ENCODE measurements at regions of chr7 and their contacts with region 1.

Region 1: DNA sequence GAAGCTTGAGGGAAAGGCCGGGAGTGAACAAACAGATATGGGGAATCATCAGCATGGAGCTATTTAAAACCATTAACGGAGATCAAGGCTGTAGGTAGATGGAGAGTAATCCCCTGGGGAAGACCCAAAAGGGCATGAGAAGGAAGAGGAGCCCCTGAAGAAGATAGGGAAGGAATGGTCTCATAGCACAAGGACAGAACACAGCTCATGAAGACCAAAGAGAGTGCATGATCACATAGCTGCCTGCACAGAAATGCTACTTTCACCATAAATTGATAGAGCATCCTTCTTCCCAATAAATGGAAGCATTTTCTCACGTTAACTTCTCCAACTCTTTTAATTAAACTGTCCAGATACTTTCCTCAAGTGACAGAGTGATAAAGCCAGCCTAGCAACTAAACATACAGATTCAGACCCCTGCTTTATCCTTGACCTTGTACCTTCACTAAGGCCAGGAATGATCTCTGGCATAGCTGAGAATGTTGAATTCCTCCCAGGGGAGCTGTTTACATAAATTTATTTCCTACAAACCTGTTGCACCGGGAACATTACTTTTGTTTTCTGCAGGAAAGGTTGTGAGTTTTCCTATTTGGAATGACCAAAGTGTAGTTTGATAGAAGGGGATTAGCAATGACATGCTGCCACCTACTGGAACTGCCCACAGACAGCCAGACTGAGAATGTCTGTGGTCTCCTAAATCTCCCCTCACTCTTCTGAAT is 110.8 kb upstream of the LRGUK start:
- DNase-seq: peak; percentile 67
- H3K4me3 ChIP-seq: peak overlapping the region in 1 of 2 experiments; percentile 17; a peak in 1 of 4 replicates
- H3K27ac ChIP-seq: peak overlapping the region in 1 of 2 experiments; percentile 95; a peak in 2 of 4 replicates
- H3K4me1 ChIP-seq: peaks cover 0 to 25% of the 10 kb centered on the region in 2 experiments; a peak in 2 of 4 replicates
- H3K27me3 ChIP-seq: no peaks in the 10 kb centered on the region
- CTCF ChIP-seq: peak; percentile 95
- EP300 ChIP-seq: peak in 1 of 2 experiments; percentile 55; a peak in 1 of 4 replicates
- RAD21 ChIP-seq: peak; percentile 99

Region 2: DNA sequence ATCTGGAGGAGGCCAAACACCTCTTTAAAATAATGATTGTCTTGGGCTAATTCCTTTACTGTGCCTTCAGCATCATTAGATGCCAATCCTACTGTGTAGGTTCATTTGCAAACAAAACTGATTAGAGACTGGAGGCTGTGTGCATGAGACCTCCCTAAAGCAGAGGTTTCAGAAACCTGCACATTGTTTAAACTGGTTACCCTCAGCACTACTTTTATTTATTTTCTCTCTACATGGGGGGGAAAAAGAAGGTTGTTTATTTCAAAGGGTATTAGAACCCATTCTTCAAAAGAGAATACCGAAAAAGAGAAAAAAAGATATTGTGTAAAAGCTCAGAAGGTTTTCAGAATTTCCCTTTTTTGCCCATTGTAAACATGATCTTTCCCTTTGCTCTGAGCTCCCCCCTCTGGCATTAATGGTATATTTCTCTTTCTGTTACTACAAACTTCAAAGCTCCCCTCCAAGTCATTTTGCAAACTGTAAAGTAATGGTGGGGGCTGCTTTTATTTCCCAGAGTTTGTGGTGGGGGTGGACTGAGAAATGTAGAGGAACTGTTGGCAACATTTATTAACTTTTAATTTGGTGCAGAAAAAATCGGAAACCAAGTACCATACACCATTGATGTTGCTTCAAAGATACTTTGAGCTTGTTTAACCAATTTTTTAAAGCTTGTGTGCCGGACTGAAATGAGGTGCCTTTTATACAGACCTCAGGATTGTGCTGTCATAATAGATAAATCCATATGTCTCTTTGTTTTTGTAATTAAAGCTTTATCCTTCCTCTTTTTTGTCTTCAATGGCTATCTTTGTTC is 582.1 kb before region 1 on chr7:
- CTCF ChIA-PET with region 1: interaction called, 16 read pairs
- POLR2A ChIA-PET with region 1: no interaction called
- DNase-seq: peak; percentile 61
- H3K4me3 ChIP-seq: no peak overlapping the region
- H3K27ac ChIP-seq: peak overlapping the region in 1 of 2 experiments; percentile 92; a peak in 2 of 4 replicates
- H3K4me1 ChIP-seq: peaks cover 22 to 30% of the 10 kb centered on the region in 2 experiments; a peak in 3 of 4 replicates
- H3K27me3 ChIP-seq: no peaks in the 10 kb centered on the region
- CTCF ChIP-seq: peak; percentile 83
- EP300 ChIP-seq: no peak
- RAD21 ChIP-seq: peak; percentile 93

Region 3: GRCh38 chr7:133770863-133771492 is 245.4 kb before region 1 on chr7:
- CTCF ChIA-PET with region 1: interaction called, 29 read pairs
- POLR2A ChIA-PET with region 1: no interaction called
- DNase-seq: no peak
- H3K4me3 ChIP-seq: no peak overlapping the region
- H3K27ac ChIP-seq: peak overlapping the region; percentile 67 to 100
- H3K4me1 ChIP-seq: peaks cover 12 to 74% of the 10 kb centered on the region in 2 experiments
- H3K27me3 ChIP-seq: no peaks in the 10 kb centered on the region
- CTCF ChIP-seq: no peak
- EP300 ChIP-seq: no peak
- RAD21 ChIP-seq: no peak

Region 4: DNA sequence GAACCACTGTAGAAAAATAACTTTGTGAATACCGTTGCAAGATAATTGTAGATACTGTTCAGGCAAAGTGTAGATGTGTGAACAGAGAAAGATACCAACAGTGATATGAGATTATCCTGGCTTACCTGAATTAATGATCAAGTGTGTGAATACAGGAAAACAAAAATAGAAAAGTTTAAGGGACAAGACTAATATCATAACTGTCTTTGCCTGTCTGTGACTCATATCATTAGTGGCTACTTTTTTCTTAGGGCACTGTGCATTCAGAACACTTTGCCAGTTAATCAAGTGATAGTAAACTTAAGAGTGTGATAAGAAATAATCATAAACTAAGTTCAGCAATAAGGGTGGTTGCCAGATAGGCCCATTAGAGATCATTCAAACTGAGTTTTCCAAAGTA is 212.3 kb before region 1 on chr7:
- CTCF ChIA-PET with region 1: interaction called, 56 read pairs
- POLR2A ChIA-PET with region 1: no interaction called
- DNase-seq: no peak
- H3K4me3 ChIP-seq: no peak overlapping the region
- H3K27ac ChIP-seq: peak overlapping the region in 1 of 2 experiments; percentile 100; a peak in 2 of 4 replicates
- H3K4me1 ChIP-seq: peaks cover 0 to 45% of the 10 kb centered on the region in 2 experiments; a peak in 2 of 4 replicates
- H3K27me3 ChIP-seq: no peaks in the 10 kb centered on the region
- CTCF ChIP-seq: no peak
- EP300 ChIP-seq: no peak
- RAD21 ChIP-seq: no peak

Region 5: DNA sequence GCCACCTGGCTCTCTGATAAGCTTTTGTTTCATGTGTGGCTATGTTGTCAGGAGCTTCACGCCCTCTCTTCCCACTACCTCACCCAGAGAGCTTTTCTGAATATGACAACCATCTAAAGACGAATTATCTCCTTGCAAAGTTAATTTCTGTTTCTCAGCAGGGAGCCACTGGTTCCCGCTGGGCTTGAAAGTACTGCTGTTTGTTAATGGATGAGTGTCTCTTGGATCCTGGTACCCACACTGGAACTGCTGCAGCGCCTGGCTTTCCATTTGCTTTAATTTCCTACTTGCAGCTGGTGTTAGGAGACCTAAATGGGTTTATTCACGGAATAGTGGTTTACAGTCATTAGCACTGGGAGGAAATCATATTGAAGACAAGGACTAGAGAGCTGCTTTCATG is 157.2 kb before region 1 on chr7:
- CTCF ChIA-PET with region 1: interaction called, 39 read pairs
- POLR2A ChIA-PET with region 1: interaction called, 5 read pairs
- DNase-seq: no peak
- H3K4me3 ChIP-seq: no peak overlapping the region
- H3K27ac ChIP-seq: peak overlapping the region in 1 of 2 experiments; percentile 98; a peak in 2 of 4 replicates
- H3K4me1 ChIP-seq: peaks cover 8 to 69% of the 10 kb centered on the region in 2 experiments
- H3K27me3 ChIP-seq: no peaks in the 10 kb centered on the region
- CTCF ChIP-seq: no peak
- EP300 ChIP-seq: 0 out of 4 replicates have a peak, but pooled peaks of 1 of the 2 experiments have one; percentile 6
- RAD21 ChIP-seq: no peak

Region 6: DNA sequence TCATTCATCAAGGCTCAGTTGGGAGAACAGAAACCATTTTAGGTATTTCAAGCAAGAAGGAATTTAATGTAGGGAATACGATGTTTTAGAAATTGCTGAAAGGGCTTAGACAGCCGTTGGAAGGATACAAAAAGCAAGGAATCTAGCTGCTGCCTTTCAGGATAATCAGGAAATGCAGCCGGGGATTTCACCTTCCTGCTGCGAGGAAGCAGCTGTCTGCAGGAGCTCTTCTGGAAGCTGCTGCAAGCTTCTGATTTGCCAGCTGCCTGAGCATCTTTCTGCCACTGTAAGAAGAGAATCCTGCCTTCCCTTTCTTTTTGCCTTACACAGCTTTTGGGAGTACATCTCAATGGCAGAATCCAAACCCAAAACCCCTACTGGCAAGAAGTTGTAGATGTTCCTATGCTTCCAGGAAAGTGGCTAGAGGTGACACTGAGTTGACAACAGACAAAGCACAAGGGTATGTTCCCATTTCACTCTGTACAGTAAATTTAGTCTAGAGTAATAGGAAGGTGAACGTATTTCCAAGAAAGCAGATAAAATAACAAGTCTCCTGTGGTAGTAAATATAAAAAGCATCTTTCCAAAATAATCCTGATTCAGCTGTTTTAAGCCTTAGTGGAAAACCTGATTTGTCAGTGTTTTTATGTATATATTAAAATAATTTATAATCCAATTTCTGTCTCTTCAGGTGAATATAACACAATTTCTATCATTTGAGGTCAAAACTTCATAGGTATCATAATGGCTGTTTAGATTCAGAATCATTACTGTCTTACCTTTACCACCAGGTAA is 37.7 kb before region 1 on chr7:
- CTCF ChIA-PET with region 1: interaction called, 26 read pairs
- POLR2A ChIA-PET with region 1: no interaction called
- DNase-seq: no peak
- H3K4me3 ChIP-seq: no peak overlapping the region
- H3K27ac ChIP-seq: peak overlapping the region in 1 of 2 experiments; percentile 83; a peak in 2 of 4 replicates
- H3K4me1 ChIP-seq: peaks cover 7 to 47% of the 10 kb centered on the region in 2 experiments; a peak in 3 of 4 replicates
- H3K27me3 ChIP-seq: no peaks in the 10 kb centered on the region
- CTCF ChIP-seq: no peak
- EP300 ChIP-seq: no peak
- RAD21 ChIP-seq: no peak

Region 7: DNA sequence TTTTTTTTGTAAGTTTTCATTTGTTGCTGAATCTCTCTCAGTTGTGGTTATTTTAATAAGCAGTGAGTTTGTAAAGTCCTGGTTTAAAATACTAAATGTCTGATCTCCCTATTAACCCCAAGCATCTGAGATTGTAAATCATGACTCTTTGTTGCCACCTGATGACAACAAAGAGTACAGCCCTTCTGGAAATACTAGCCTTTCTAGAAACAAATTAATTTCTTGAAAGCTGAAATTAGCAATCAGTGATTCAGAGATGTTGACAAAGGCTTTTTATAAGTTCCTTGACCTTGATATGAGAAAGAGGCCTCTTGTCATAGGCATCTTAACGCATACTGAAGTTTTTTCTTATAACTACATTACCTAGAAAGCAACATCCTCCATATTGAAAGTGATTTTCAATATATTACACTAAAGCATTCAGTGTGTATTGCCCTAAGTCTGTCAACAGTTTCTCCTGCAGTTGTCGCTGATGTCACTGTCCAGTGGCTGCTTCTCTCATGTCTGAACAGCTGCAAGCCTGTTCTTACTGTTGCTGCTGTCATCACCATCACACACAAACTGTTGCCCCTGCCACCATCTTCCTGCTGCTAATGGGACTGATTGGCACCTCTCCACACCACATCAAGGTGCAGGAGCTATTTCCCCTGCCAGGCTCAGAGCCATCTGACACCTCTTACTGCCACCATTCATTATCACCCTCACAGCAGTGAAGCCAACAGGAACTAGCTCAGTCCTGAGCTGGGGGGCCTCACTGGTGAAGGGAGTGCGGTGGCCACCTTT is 15.6 kb after region 1 on chr7:
- CTCF ChIA-PET with region 1: interaction called, 55 read pairs
- POLR2A ChIA-PET with region 1: no interaction called
- DNase-seq: no peak
- H3K4me3 ChIP-seq: no peak overlapping the region
- H3K27ac ChIP-seq: peak overlapping the region in 1 of 2 experiments; percentile 53; a peak in 1 of 4 replicates
- H3K4me1 ChIP-seq: peaks cover 0 to 5% of the 10 kb centered on the region in 2 experiments; a peak in 2 of 4 replicates
- H3K27me3 ChIP-seq: no peaks in the 10 kb centered on the region
- CTCF ChIP-seq: peak; percentile 31
- EP300 ChIP-seq: no peak
- RAD21 ChIP-seq: peak; percentile 62

Measured in SK-N-SH (cell line).